ENCODE measurements at regions of chr14 and their contacts with region 1.

Region 1: DNA sequence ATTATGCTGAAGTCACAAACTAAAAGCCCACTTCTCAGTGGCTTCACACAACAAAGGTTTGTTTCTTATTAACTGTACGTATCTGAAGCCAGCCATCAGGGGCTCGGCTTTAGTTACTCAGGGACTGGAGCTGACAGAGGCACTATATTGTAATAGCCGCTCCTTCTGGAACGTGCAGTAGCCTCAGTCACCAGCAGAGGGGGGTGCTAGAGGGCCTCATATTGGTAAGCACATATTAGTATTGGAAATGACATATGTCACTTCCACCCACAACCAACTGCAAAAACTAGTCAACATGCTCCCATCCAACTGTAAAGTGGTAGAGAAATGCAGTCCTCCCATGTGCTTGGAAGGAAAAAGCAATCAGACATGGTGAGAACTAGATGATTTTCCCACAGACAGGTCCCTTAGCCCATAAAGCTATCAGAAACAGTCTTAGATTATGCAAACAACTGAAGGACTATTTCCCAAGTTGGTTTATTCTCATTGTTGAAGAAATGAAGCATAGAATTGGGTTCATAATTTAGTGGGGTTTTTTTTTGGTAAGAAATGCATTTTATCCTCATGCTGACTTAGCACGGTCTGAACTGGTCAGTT is 183.6 kb upstream of the G2E3 start:
- DNase-seq: peak; percentile 25 to 63 (median 47)
- ATAC-seq: peak; percentile 82
- H3K4me3 ChIP-seq: no peak overlapping the region
- H3K4me3 Mint-ChIP-seq: no peak overlapping the region
- H3K27ac ChIP-seq: no peak overlapping the region
- H3K27ac Mint-ChIP-seq: no peak overlapping the region
- H3K4me1 ChIP-seq: no peaks in the 10 kb centered on the region
- H3K4me1 Mint-ChIP-seq: no peaks in the 10 kb centered on the region
- H3K27me3 ChIP-seq: peaks cover 3 to 7% of the 10 kb centered on the region in 2 experiments
- H3K27me3 Mint-ChIP-seq: peaks cover 41% of the 10 kb centered on the region
- CTCF ChIP-seq: peak; percentile 72

Region 2: GRCh38 chr14:30330445-30330844 is 44.9 kb before region 1 on chr14:
- CTCF ChIA-PET with region 1: no interaction called
- POLR2A ChIA-PET with region 1: no interaction called
- intact Hi-C with region 1: no loop called
- DNase-seq: peak in 1 of 14 experiments; percentile 1
- ATAC-seq: no peak
- H3K4me3 ChIP-seq: no peak overlapping the region
- H3K4me3 Mint-ChIP-seq: no peak overlapping the region
- H3K27ac ChIP-seq: no peak overlapping the region
- H3K27ac Mint-ChIP-seq: no peak overlapping the region
- H3K4me1 ChIP-seq: no peaks in the 10 kb centered on the region
- H3K4me1 Mint-ChIP-seq: no peaks in the 10 kb centered on the region
- H3K27me3 ChIP-seq: no peaks in the 10 kb centered on the region
- H3K27me3 Mint-ChIP-seq: no peaks in the 10 kb centered on the region
- CTCF ChIP-seq: no peak

Region 3: GRCh38 chr14:30521899-30522736 is 146.7 kb after region 1 on chr14:
- CTCF ChIA-PET with region 1: no interaction called
- POLR2A ChIA-PET with region 1: no interaction called
- intact Hi-C with region 1: loop called (anchors 1 to 5 kb)
- DNase-seq: peak in 3 of 14 experiments; percentile 53 to 67 (median 60)
- ATAC-seq: peak; percentile 65
- H3K4me3 ChIP-seq: no peak overlapping the region
- H3K4me3 Mint-ChIP-seq: no peak overlapping the region
- H3K27ac ChIP-seq: no peak overlapping the region
- H3K27ac Mint-ChIP-seq: no peak overlapping the region
- H3K4me1 ChIP-seq: no peaks in the 10 kb centered on the region
- H3K4me1 Mint-ChIP-seq: peaks cover 16% of the 10 kb centered on the region
- H3K27me3 ChIP-seq: no peaks in the 10 kb centered on the region
- H3K27me3 Mint-ChIP-seq: no peaks in the 10 kb centered on the region
- CTCF ChIP-seq: peak; percentile 89

Region 4: GRCh38 chr14:30610787-30611343 is 235.5 kb after region 1 on chr14:
- CTCF ChIA-PET with region 1: interaction called, 4 read pairs
- POLR2A ChIA-PET with region 1: no interaction called
- intact Hi-C with region 1: loop called (anchors 2 to 5 kb)
- DNase-seq: peak in 7 of 14 experiments; percentile 8 to 63 (median 42)
- ATAC-seq: peak; percentile 41
- H3K4me3 ChIP-seq: no peak overlapping the region
- H3K4me3 Mint-ChIP-seq: no peak overlapping the region
- H3K27ac ChIP-seq: no peak overlapping the region
- H3K27ac Mint-ChIP-seq: peak overlapping the region; percentile 21
- H3K4me1 ChIP-seq: no peaks in the 10 kb centered on the region
- H3K4me1 Mint-ChIP-seq: peaks cover 6% of the 10 kb centered on the region
- H3K27me3 ChIP-seq: no peaks in the 10 kb centered on the region
- H3K27me3 Mint-ChIP-seq: no peaks in the 10 kb centered on the region
- CTCF ChIP-seq: peak; percentile 18

Region 5: GRCh38 chr14:30906752-30907658 is 531.6 kb after region 1 on chr14:
- CTCF ChIA-PET with region 1: no interaction called
- POLR2A ChIA-PET with region 1: no interaction called
- intact Hi-C with region 1: loop called in 1 of 2 experiments (anchors 10 kb)
- DNase-seq: peak in 3 of 14 experiments; percentile 8 to 20 (median 18)
- ATAC-seq: no peak
- H3K4me3 ChIP-seq: no peak overlapping the region
- H3K4me3 Mint-ChIP-seq: no peak overlapping the region
- H3K27ac ChIP-seq: no peak overlapping the region
- H3K27ac Mint-ChIP-seq: no peak overlapping the region
- H3K4me1 ChIP-seq: no peaks in the 10 kb centered on the region
- H3K4me1 Mint-ChIP-seq: no peaks in the 10 kb centered on the region
- H3K27me3 ChIP-seq: no peaks in the 10 kb centered on the region
- H3K27me3 Mint-ChIP-seq: no peaks in the 10 kb centered on the region
- CTCF ChIP-seq: no peak